HCT116 (cell line): ENCODE measurements at regions of chr5 and their contacts with region 1.

Region 1: GRCh38 chr5:128224336-128224735 is 140.8 kb downstream of the SLC12A2 start:
- DNase-seq: no peak
- ATAC-seq: no peak
- H3K4me3 ChIP-seq: no peak overlapping the region
- H3K27ac ChIP-seq: no peak overlapping the region
- H3K4me1 ChIP-seq: peaks cover 0 to 9% of the 10 kb centered on the region in 2 experiments; a peak in 2 of 4 replicates
- H3K27me3 ChIP-seq: no peaks in the 10 kb centered on the region
- CTCF ChIP-seq: no peak
- POLR2A ChIP-seq: no peak
- RAD21 ChIP-seq: no peak

Region 2: DNA sequence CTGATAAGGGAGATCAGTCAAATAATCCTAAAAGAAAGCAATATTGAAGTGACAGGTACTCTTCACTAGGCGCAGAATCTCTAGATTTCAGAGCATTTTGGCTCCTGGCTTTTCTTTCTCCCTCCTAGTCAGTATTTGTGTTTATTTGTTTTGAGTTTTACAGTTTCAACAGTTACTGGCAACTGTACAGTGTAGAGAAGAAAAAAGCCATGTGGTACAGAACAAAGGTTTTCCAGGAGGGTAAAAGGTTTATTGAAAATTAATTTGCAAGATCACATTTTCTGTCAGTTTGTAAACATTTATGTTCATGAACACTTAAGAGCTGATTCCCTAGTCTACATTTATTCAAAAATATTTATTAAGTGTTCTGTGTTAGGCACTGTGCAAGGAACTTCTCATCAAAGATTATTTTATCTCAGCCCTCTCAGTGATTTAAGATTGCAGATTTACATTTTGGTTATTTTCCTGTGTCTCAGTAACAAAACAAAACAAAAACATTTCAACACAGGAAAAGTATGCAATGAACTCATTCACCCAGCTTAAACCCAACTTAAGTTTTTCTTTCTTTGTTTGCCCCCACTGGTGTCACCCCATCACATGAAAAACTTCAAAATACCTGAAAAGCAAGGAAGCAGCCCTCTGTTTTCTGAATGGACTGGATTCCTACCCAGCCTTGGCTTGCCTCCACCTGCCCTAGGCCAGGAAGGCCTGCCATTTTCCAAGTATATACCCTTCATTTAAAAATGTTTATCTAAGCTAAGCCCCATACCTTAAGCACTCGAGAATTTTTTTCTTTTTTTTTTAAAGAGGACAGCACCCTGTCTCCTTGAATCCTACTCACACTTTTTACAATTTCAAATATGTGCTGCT is 1536.5 kb after region 1 on chr5:
- CTCF ChIA-PET with region 1: no interaction called
- POLR2A ChIA-PET with region 1: no interaction called
- RAD21 ChIA-PET with region 1: no interaction called
- intact Hi-C with region 1: loop called (anchors 5 kb)
- DNase-seq: no peak
- ATAC-seq: no peak
- H3K4me3 ChIP-seq: no peak overlapping the region
- H3K27ac ChIP-seq: no peak overlapping the region
- H3K4me1 ChIP-seq: no peaks in the 10 kb centered on the region
- H3K27me3 ChIP-seq: no peaks in the 10 kb centered on the region
- CTCF ChIP-seq: no peak
- POLR2A ChIP-seq: no peak
- RAD21 ChIP-seq: no peak